Left ventricle myocardium superior (tissue), 1 donor: ENCODE measurements at regions of chr12 and their contacts with region 1.

Region 1: GRCh38 chr12:116599285-116600136 is 40.3 kb downstream of the MAP1LC3B2 start:
- DNase-seq: peak; percentile 90
- ATAC-seq: peak; percentile 86

Region 2: DNA sequence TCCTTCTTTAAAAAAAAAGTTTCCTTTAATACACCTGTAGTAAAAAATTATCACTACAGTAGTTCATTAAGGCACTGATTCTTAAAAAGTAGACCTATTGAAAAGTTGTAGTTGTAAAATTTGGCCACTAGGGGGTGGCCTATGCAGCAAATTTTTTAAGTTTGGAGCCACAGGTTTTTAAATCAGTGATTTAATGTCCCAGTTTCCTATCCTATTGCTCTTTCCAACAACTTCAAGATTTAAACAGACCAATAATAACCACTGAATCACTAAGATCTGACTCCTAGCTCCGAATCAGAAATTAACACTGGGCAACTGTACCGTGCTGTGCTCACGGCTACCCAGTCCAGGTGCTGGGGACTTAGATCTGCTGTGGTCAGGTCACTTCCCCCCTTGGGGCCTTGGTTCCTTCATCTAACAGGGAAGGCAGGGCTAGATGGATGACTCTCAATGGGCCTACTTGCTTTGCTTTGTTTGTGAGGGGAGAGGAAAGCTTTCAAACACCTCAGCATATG is 601.3 kb before region 1 on chr12:
- intact Hi-C with region 1: loop called (anchors 10 kb)
- DNase-seq: no peak
- ATAC-seq: peak; percentile 42

Region 3: GRCh38 chr12:116210131-116210530 is 389.4 kb before region 1 on chr12:
- intact Hi-C with region 1: no loop called
- DNase-seq: no peak
- ATAC-seq: no peak

Region 4: DNA sequence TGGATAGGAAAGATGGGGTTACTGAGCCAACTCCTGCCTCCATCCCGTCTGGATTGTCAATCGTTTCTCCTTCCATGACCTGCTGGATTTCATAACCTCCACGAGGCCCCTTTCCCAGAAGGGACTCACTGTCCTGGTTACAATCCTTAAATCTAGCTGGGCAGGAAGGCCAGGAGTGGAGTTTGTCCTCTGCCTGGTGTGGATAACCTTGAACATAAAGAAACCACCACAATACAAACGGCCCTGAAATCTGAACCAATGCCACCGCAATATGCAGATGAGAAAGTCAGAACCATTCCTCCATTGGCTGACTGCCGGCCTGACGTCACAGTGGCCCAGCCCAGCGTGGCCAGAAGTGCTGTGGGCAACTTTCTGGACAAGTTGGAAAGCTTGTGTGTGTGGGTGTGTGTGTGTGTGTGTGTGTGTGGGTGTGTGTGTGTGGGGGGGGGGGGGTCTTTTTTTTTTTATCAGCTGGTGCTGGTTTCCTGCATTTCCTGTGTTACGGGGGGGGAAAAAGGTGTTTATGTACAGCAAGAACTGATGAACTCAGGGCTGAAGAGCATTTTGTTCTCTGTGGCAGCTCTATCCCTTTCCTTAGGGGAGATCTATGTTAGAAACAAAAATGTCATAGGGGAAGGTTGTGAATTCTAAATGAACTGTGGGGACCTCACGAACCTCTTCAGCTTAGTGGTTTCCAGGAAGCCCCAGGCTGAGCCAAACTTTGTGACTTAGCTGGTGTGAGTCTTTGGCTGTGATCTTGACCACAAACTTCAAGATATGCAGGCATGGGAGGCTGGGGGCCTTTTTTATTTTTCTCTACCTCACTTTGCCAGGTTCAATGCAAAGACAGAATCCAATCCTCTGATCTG is 240.4 kb before region 1 on chr12:
- intact Hi-C with region 1: no loop called
- DNase-seq: peak; percentile 95
- ATAC-seq: peak; percentile 98

Region 5: GRCh38 chr12:116891952-116892744 is 292.6 kb after region 1 on chr12:
- intact Hi-C with region 1: no loop called
- DNase-seq: no peak
- ATAC-seq: no peak

Region 6: DNA sequence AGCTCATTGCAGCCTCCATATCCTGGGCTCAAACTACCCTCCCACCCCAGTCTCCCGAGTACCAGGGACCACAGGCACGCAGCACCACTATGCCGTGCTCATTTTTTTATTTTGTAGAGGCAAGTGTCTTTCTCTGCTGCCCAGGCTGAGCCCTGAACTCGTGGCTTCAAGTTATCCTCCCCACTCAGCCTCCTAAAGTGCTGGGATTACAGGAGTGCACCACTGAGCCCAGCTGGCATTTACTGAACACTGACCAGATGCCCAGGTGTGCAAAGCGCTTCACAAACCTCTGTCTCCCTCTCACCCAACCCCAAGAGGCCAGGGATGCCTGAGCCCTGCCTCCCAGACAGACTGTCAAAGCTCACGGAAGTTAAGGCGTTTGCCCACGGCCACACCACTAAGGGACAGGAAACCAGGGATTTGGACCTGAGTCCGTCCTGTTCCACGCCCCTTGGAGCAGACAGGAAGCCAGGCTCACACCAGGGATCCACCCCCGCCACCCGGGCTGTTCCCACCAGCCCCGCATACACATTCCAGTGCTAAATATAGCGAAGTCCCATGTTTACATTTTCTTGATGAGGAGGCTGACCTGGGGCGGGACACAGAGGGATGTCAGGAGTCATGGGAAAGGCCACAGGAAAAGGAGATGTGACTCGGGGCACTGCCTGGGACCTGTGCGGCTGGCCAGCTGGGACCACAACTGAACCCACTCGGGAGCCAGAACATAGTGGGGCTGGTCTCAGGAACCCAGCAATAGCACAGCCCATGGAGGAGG is 448.5 kb after region 1 on chr12:
- intact Hi-C with region 1: no loop called
- DNase-seq: peak; percentile 77
- ATAC-seq: peak; percentile 38